ENCODE measurements at regions of chr2 and their contacts with region 1.

Region 1: DNA sequence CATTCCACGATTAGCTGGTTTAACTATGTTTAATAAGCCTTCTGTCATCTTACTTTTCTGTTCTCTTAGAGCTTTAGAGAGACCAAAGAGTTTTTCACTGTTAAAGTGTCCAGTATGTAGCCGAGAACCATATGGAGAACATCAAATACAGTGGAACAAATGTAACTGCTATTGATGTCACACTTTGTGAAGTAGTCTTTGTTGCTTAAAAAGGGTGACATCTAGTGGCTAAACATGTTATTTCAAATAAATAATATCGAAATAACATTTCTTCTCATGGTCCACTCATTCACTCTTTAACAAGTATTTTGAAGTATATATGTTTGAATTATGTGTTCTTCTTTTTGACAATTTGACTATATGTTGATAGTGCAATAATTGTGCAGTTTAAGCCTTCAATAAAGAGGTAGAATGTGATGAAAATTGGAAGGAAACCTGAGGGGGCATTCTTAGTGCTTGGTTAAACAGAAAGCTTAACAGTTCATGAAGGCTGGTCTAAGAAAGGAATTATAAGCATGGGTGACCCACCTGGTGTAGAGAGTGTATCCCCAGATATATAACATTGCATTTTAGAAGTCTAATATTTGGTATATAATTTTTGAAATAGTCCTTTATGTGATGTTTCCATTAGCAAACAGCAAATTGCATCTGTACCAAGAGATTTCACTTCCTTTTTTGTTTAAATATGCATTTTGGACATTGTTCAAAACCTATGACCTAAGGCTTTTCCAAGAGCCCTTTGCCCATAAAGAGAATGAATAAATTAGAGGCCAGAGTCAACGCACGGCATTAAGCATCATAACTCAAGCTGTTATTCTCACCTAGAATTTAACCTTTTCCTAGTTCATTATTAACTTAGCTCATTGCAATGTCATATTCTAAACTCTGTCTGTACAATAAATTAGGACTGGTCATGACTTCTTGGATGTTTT is 112.1 kb downstream of the KYNU start:
- DNase-seq: peak; percentile 44
- ATAC-seq: peak; percentile 80
- H3K4me3 ChIP-seq: no peak overlapping the region
- H3K27ac ChIP-seq: no peak overlapping the region
- H3K4me1 ChIP-seq: no peaks in the 10 kb centered on the region
- H3K27me3 ChIP-seq: no peaks in the 10 kb centered on the region
- CTCF ChIP-seq: peak; percentile 70
- EP300 ChIP-seq: no peak
- POLR2A ChIP-seq: no peak
- RAD21 ChIP-seq: peak; percentile 63; the same call in 1 of the 2 replicates

Region 2: GRCh38 chr2:142165790-142166189 is 823.7 kb before region 1 on chr2:
- CTCF ChIA-PET with region 1: no interaction called
- POLR2A ChIA-PET with region 1: no interaction called
- in situ Hi-C with region 1: no loop called
- intact Hi-C with region 1: loop called (anchors 10 kb)
- DNase-seq: peak; percentile 38
- ATAC-seq: peak; percentile 99
- H3K4me3 ChIP-seq: no peak overlapping the region
- H3K27ac ChIP-seq: no peak overlapping the region
- H3K4me1 ChIP-seq: no peaks in the 10 kb centered on the region
- H3K27me3 ChIP-seq: no peaks in the 10 kb centered on the region
- CTCF ChIP-seq: peak; percentile 55
- EP300 ChIP-seq: no peak
- POLR2A ChIP-seq: no peak
- RAD21 ChIP-seq: no peak

Region 3: DNA sequence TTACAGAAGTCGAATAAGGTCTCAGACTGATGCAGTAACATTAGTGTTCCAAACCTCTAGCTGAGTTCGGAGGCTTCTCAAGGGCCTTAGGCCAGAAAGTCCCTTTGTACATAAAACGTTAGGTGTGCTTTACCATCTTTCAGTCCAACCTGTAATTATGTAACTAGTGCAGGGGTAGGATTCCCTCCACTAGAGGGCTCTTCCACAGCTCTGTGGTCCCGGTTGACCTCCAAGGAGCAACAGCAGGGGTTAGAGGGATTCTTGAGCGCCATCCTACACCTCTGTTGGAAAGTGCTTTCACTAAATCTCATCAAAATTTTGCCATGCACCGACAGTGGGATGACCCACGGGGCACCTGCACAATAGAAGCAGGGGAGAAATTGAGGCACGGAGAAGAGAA is 702.9 kb before region 1 on chr2:
- CTCF ChIA-PET with region 1: interaction called, 8 read pairs
- POLR2A ChIA-PET with region 1: no interaction called
- in situ Hi-C with region 1: loop called (anchors 25 kb)
- intact Hi-C with region 1: loop called (anchors 5 kb)
- DNase-seq: peak; percentile 55
- ATAC-seq: peak; percentile 97
- H3K4me3 ChIP-seq: no peak overlapping the region
- H3K27ac ChIP-seq: no peak overlapping the region
- H3K4me1 ChIP-seq: no peaks in the 10 kb centered on the region
- H3K27me3 ChIP-seq: no peaks in the 10 kb centered on the region
- CTCF ChIP-seq: peak; percentile 80
- EP300 ChIP-seq: no peak
- POLR2A ChIP-seq: no peak
- RAD21 ChIP-seq: peak; percentile 36; the same call in 1 of the 2 replicates

Region 4: GRCh38 chr2:142682528-142682927 is 307.0 kb before region 1 on chr2:
- CTCF ChIA-PET with region 1: interaction called, 17 read pairs
- POLR2A ChIA-PET with region 1: no interaction called
- in situ Hi-C with region 1: loop called (anchors 5 kb)
- intact Hi-C with region 1: loop called (anchors 1 kb)
- DNase-seq: peak; percentile 32
- ATAC-seq: no peak
- H3K4me3 ChIP-seq: no peak overlapping the region
- H3K27ac ChIP-seq: no peak overlapping the region
- H3K4me1 ChIP-seq: no peaks in the 10 kb centered on the region
- H3K27me3 ChIP-seq: no peaks in the 10 kb centered on the region; a peak in 1 of 5 replicates
- CTCF ChIP-seq: peak; percentile 40
- EP300 ChIP-seq: no peak
- POLR2A ChIP-seq: no peak
- RAD21 ChIP-seq: no peak

Region 5: GRCh38 chr2:142796161-142796560 is 193.4 kb before region 1 on chr2:
- CTCF ChIA-PET with region 1: interaction called, 4 read pairs
- POLR2A ChIA-PET with region 1: no interaction called
- in situ Hi-C with region 1: loop called (anchors 5 kb)
- intact Hi-C with region 1: loop called (anchors 1 kb)
- DNase-seq: peak; percentile 31
- ATAC-seq: peak; percentile 60; the same call in 1 of the 3 replicates
- H3K4me3 ChIP-seq: no peak overlapping the region
- H3K27ac ChIP-seq: no peak overlapping the region
- H3K4me1 ChIP-seq: no peaks in the 10 kb centered on the region
- H3K27me3 ChIP-seq: no peaks in the 10 kb centered on the region; a peak in 1 of 5 replicates
- CTCF ChIP-seq: peak; percentile 31; the same call in 1 of the 2 replicates
- EP300 ChIP-seq: no peak
- POLR2A ChIP-seq: no peak
- RAD21 ChIP-seq: 0 out of 2 replicates have a peak, but pooled peaks have one; percentile 21

Region 6: GRCh38 chr2:142914507-142915313 is 74.8 kb before region 1 on chr2:
- CTCF ChIA-PET with region 1: no interaction called
- POLR2A ChIA-PET with region 1: no interaction called
- in situ Hi-C with region 1: no loop called
- intact Hi-C with region 1: no loop called
- DNase-seq: no peak
- ATAC-seq: no peak
- H3K4me3 ChIP-seq: no peak overlapping the region
- H3K27ac ChIP-seq: no peak overlapping the region
- H3K4me1 ChIP-seq: peaks cover 13% of the 10 kb centered on the region
- H3K27me3 ChIP-seq: no peaks in the 10 kb centered on the region
- CTCF ChIP-seq: no peak
- EP300 ChIP-seq: no peak
- POLR2A ChIP-seq: no peak
- RAD21 ChIP-seq: no peak

Region 7: GRCh38 chr2:142937347-142937746 is 52.2 kb before region 1 on chr2:
- CTCF ChIA-PET with region 1: no interaction called
- POLR2A ChIA-PET with region 1: no interaction called
- in situ Hi-C with region 1: no loop called
- intact Hi-C with region 1: no loop called
- DNase-seq: no peak
- ATAC-seq: peak; percentile 25; the same call in 1 of the 3 replicates
- H3K4me3 ChIP-seq: no peak overlapping the region
- H3K27ac ChIP-seq: no peak overlapping the region
- H3K4me1 ChIP-seq: peaks cover 16% of the 10 kb centered on the region
- H3K27me3 ChIP-seq: no peaks in the 10 kb centered on the region
- CTCF ChIP-seq: no peak
- EP300 ChIP-seq: no peak
- POLR2A ChIP-seq: no peak
- RAD21 ChIP-seq: no peak